Heart right ventricle (tissue), 16 donors: ENCODE measurements at regions of chr1 and their contacts with region 1.

Region 1: DNA sequence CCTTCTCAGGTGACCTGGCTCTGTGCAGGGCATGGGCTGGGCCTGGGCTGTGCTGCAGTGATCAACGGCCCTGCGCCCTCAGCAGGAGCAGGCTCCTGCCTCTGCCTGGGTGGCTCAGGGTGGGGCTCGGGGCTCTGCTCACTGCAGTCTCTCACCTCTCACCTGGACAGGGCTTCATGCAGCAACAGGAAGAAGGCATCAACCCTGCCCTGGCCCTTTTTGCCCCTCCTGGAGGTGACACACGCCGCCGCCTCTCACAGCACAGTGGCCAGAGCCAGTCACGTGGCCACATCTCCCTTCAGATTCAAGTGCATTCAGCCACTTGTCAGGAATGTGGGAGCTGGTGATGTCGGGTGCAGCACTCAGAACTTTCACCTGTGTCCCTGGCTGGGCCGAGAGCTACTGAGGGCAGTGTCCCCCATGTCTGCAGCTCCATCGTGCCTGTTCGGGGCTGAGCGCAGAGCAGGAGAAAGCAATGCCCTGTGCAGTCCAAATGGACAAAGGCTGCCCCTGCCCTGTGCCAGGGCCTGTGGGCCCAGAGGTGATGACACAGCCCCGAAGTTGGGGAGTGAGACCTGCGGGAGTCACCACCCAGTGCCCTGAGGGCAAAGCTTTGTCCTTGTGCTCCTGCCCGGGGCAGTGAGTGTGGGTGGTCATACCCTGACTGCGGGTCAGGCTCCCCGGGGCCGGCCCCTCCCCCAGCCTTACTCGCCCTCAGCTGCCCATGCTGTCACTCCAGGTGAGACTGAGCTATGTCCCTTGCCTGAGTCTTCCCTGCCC is 314.0 kb downstream of the PTPRU start:
- DNase-seq: no peak
- ATAC-seq: peak in 1 of 8 donors; percentile 24
- H3K4me3 ChIP-seq: no peak overlapping the region
- H3K27ac ChIP-seq: no peak overlapping the region
- H3K4me1 ChIP-seq: no peaks in the 10 kb centered on the region
- H3K27me3 ChIP-seq: peaks cover 0 to 20% (median 10%) of the 10 kb centered on the region in 7 donors
- CTCF ChIP-seq: no peak

Region 2: DNA sequence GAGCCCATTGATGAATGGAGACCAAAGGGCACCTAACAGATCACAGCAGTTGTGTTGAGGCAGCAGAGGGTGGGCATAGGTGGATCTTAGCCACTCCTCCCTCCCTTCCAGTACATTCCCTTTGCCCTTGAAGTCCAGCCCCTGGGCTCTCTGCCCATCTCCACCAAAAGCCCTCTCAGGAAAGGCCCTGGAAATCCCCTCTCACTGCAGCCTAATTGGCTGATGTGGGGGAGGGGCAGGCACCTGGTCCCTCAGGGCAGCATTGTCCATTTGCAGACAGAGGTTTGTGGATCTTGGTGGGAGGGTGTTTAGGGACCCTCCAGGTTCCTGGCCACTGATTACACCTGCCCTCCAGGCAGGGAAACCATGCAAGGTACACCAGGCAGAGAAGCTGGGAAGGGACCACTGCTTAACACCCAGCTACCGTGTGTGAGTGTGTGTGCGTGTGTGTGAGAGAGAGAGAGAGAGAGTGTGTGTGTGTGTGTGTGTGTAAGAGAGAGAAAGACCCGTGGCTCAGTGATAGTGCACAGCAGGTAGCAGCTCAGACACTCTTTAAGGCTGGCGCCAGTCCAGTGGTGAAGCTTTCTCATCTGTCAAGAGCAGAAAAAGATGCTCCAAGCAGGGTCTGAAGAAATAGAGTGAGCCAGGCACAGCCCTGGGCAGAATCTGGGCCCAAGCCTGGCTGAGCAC is 1102.0 kb after region 1 on chr1:
- intact Hi-C with region 1: loop called in 4 of 10 experiments (anchors 2 to 10 kb)
- DNase-seq: no peak
- ATAC-seq: no peak
- H3K4me3 ChIP-seq: no peak overlapping the region
- H3K27ac ChIP-seq: no peak overlapping the region
- H3K4me1 ChIP-seq: peaks cover 0 to 4% (median 0%) of the 10 kb centered on the region in 9 donors
- H3K27me3 ChIP-seq: peaks cover 5 to 48% (median 17%) of the 10 kb centered on the region in 7 donors
- CTCF ChIP-seq: no peak

Region 3: DNA sequence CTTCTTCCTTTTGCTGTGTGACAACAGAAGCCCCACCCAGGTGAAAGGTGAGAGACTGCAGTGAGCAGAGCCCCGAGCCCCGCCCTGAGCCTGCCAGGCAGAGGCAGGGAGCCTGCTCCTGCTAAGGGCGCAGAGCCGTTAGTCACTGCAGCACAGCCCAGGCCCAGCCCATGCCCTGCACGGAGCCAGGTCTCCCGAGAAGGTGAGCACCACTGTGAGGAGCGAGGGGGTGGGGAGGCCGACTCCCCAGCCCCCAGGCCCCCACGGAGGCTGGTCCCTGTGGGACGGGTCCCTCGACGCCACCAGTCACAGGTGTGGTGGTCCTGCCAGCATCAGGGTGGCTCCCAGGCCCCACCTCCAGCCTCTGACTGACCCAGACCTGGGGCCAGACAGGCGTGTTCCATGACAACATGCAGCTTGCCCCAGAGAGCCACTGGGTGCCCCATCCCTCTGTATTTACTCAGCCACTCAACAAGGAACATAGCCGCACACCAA is 1107.5 kb after region 1 on chr1:
- intact Hi-C with region 1: loop called in 4 of 10 experiments (anchors 2 to 10 kb)
- DNase-seq: no peak
- ATAC-seq: peak in 1 of 8 donors; percentile 46
- H3K4me3 ChIP-seq: no peak overlapping the region
- H3K27ac ChIP-seq: no peak overlapping the region
- H3K4me1 ChIP-seq: peaks cover 0 to 4% (median 0%) of the 10 kb centered on the region in 9 donors
- H3K27me3 ChIP-seq: peaks cover 0 to 24% (median 8%) of the 10 kb centered on the region in 7 donors
- CTCF ChIP-seq: no peak